Left colon (tissue), 2 donors: ENCODE measurements at regions of chr9 and their contacts with region 1.

Region 1: DNA sequence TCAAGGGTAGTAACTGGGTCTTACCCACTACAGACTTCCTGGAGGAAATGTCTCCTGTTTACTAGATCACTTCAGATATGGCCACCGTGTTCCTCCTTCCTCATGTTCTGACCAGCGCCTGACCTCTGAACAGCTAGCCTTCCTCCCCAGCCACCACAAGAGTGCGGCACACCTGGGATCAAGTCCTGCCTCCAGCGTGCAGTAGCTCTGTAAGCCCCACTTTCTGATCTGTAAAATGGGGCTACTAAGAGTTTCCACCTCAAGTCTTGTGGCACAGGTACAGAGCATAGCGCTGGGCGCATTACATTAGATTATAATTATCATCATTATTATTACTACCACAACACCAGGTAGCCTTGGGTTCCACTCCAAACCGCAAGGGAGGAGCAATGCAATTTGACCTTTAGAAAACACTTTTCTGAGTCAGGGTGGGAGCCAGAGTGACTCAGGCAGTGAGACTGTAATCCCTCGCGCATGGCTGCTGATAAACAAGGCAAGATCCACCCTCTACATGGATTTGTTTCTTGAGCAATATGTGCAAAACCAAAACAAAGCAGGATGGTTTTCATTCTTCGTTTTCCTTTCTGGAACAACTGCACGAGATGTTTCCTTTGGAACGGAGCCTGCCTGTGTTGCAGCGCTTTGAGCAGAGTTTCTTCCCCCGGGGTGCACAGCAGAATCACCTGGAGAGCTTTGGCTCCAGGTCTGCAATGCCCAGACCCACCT is 65.0 kb upstream of the ANGPTL2 start:
- DNase-seq: peak in 1 of 2 donors; percentile 55
- ATAC-seq: peak; percentile 35

Region 2: GRCh38 chr9:127122176-127123063 is 65.0 kb before region 1 on chr9 and contains the start of gene ANGPTL2:
- intact Hi-C with region 1: loop called in 1 of 2 experiments (anchors 10 kb)
- DNase-seq: peak; percentile 57 to 84
- ATAC-seq: peak; percentile 72
- total RNA-seq, gene ANGPTL2: 6.0 to 12.0 TPM

Region 3: DNA sequence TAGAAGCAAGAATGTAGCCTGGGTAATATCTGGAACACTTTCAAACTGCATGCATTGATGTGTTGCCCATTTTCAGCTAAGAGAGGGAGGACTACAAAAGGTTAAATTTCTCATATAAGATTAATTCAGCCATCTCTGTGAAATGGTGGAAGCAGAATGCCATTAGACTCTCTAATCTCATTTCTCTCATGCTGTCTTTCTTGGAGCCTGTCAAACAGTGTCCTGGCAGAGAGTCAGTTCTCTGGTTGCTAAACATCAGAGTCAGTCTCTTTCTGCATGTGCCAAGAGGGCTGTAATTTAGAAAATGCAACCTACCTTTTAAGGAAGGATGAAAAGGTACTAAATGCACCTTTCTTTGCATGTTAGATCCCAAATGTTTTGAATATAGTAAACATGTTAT is 76.3 kb after region 1 on chr9:
- intact Hi-C with region 1: no loop called
- DNase-seq: no peak
- ATAC-seq: no peak